ENCODE measurements at regions of chr1 and their contacts with region 1.

Region 1: DNA sequence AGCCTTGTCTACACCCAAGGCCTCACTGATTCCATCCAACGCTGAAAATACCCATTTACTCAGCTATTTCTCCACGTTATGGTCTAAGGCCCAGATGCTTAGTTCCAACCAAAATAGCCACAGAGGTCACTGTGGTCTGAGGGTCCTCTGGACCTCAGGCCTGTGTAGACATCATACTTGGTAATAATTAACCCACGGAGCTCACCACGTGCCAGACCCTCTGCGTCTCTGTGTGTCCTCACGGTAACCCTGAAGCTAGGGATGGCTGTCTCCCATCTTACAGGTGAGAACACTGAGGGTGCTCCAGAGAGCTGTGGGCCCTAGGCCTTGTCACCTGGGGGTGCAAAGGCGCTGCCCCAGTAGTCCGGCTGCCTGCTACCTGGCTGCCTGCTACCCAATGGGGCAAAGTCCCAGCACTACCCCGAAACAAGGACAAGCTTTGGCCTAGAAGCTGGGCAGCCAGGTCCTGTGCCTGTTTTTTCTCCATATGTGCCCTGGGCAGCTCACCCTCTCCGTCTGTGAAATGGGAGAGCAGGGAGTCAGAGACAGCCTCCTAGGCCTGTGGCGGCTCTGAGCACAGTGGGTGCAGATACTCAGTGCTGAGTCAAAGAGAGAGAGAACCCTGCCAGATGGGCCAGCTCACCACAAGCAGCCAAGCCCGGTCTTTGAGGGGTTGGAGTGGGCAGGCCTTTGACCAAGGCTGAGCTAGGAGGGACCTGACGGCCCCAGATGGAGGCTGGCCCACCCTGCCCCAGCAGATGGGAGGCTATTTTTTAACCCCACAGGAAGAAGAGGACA is 17.0 kb upstream of the RUNX3 start:
- DNase-seq: peak; percentile 23
- ATAC-seq: no peak
- H3K4me3 ChIP-seq: no peak overlapping the region
- H3K4me3 Mint-ChIP-seq: no peak overlapping the region
- H3K27ac ChIP-seq: no peak overlapping the region
- H3K27ac Mint-ChIP-seq: peak overlapping the region; percentile 32
- H3K4me1 ChIP-seq: peaks cover 13 to 34% of the 10 kb centered on the region in 2 donors
- H3K4me1 Mint-ChIP-seq: peaks cover 36% of the 10 kb centered on the region
- H3K27me3 ChIP-seq: no peaks in the 10 kb centered on the region
- H3K27me3 Mint-ChIP-seq: no peaks in the 10 kb centered on the region
- CTCF ChIP-seq: no peak

Region 2: DNA sequence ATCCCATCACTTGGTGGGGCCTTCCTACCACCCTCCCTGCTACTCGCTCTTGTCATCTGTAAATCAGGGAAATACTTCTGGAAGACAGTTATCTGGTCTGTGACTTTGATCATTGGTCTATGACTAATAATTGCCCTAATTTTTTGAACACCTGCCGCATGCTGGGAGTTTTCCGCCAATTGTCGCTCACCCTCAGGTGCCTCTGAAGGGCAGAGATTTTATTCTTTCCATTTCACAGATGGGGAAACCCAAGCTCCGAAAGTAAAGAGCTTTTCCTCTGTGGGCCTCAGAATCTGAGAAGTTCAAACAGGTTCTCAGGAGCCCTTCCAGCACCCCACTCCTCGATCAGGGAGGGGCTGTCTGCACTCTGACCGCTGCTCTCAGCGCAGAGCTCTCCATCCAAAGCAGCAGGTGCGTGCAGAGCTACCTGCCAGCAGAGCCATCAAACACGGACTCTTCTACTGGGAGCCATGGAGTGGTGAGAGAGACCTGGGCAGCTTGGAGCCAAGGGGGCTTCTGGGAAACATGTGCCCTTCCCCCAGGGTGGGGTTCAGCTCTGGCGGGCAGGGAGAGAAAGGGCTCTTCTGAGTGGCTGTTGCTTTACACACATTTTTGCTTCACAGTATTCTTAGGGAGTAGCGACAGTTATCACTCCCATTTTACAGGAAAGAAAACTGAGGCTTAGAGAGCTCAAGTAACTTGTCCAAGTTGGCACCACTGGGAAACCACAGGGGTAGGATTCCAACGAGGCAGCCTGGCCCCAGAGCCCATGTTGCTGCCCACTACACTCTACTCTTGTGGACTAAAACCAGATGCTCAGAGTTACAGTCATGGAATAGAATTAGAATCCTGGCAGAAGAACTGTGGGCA is 11.2 kb before region 1 on chr1:
- CTCF ChIA-PET with region 1: interaction called, 38 read pairs
- POLR2A ChIA-PET with region 1: interaction called, 3 read pairs
- intact Hi-C with region 1: no loop called
- DNase-seq: peak; percentile 26
- ATAC-seq: no peak
- H3K4me3 ChIP-seq: no peak overlapping the region
- H3K4me3 Mint-ChIP-seq: peak overlapping the region; percentile 66
- H3K27ac ChIP-seq: no peak overlapping the region
- H3K27ac Mint-ChIP-seq: peak overlapping the region; percentile 70
- H3K4me1 ChIP-seq: peaks cover 36 to 50% of the 10 kb centered on the region in 2 donors
- H3K4me1 Mint-ChIP-seq: peaks cover 43% of the 10 kb centered on the region
- H3K27me3 ChIP-seq: no peaks in the 10 kb centered on the region
- H3K27me3 Mint-ChIP-seq: no peaks in the 10 kb centered on the region
- CTCF ChIP-seq: no peak

Measured in B cell (primary cell).